ENCODE measurements at regions of chr2 and their contacts with region 1.

Region 1: GRCh38 chr2:218301176-218301819 is 9.0 kb upstream of the TMBIM1 start:
- DNase-seq: peak; percentile 74
- H3K4me3 ChIP-seq: no peak overlapping the region
- H3K27ac ChIP-seq: no peak overlapping the region
- H3K4me1 ChIP-seq: peaks cover 24% of the 10 kb centered on the region
- H3K27me3 ChIP-seq: no peaks in the 10 kb centered on the region
- CTCF ChIP-seq: peak; percentile 94

Region 2: GRCh38 chr2:217703102-217703501 is 598.2 kb before region 1 on chr2:
- CTCF ChIA-PET with region 1: no interaction called
- dilution Hi-C with region 1: no loop called
- in situ Hi-C with region 1: no loop called
- intact Hi-C with region 1: no loop called
- DNase-seq: no peak
- H3K4me3 ChIP-seq: no peak overlapping the region
- H3K27ac ChIP-seq: no peak overlapping the region
- H3K4me1 ChIP-seq: peaks cover 11% of the 10 kb centered on the region
- H3K27me3 ChIP-seq: no peaks in the 10 kb centered on the region
- CTCF ChIP-seq: no peak

Region 3: DNA sequence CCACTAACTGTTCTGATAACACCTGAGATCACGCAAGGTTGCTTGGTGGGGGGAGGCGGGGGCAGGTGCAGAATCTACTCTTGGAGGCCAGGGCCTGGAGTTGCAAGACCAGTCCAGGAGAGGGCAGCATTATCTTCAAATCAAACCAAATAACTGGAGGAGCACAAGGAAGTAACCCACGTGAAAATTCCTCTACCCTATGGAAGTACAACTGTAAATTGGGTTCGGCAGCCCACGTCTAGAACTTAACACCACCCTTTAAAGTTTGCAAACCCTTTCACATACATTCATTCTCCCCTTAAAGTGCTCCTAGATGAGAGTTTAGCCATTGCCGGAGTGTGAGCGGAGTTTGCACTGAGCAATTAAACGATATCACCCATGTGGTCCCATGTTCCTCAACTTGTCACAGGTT is 114.9 kb before region 1 on chr2:
- CTCF ChIA-PET with region 1: no interaction called
- dilution Hi-C with region 1: no loop called
- in situ Hi-C with region 1: no loop called
- intact Hi-C with region 1: no loop called
- DNase-seq: peak; percentile 57
- H3K4me3 ChIP-seq: no peak overlapping the region
- H3K27ac ChIP-seq: no peak overlapping the region
- H3K4me1 ChIP-seq: peaks cover 4% of the 10 kb centered on the region
- H3K27me3 ChIP-seq: no peaks in the 10 kb centered on the region
- CTCF ChIP-seq: peak; percentile 82 to 84

Region 4: DNA sequence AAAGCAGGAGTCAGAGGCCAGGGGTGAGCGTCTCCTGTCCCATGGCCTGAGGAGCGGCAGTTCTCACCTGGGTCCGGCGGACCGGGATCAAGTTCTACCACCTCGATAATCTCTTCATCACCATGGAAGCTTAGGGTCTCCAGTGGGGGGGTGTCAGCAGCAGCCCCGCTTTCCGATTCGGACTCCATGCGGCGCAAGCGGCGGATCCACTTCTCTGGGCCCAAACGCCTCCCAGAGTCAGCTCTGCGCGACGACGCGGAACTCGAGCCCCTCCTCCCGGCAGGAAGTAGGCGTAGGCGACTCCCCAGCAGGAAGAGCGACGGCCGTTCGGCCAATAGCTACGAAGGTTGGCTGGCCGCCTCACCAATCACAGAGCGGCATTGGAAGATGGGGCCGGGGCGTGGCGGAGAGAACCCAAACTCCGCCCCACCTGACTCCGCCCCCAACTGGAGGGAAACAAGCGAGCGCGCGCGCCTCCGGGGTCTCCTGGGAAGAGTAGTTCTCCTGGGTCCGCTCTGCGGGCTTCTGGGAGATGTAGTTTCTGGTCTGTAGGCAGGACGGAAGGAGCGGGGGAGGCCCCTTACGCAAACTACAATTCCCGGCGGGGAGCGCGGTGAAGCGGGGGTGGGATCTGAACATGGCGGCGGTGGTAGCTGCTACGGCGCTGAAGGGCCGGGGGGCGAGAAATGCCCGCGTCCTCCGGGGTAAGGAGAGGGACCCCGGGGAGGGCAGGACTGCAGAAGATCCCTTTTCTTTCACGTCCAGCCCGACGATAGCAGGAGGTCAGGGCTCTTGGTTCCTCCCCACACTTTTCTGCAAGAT is 31.2 kb before region 1 on chr2 and contains the starts of genes AAMP and PNKD:
- CTCF ChIA-PET with region 1: interaction called, 3 read pairs
- dilution Hi-C with region 1: no loop called
- in situ Hi-C with region 1: no loop called
- intact Hi-C with region 1: loop called (anchors 1 kb)
- DNase-seq: peak; percentile 100
- H3K4me3 ChIP-seq: peak within 1 kb of the TSS; percentile 72 to 91 (median 81)
- H3K27ac ChIP-seq: peak within 1 kb of the TSS; percentile 62
- H3K4me1 ChIP-seq: peaks cover 17% of the 10 kb centered on the region
- H3K27me3 ChIP-seq: no peaks in the 10 kb centered on the region
- CTCF ChIP-seq: peak in 1 of 2 donors; percentile 36
- total RNA-seq, gene AAMP: 80.2 to 87.6 TPM
- total RNA-seq, gene PNKD: 15.7 to 29.8 TPM

Region 5: GRCh38 chr2:218354850-218355443 is 53.6 kb after region 1 on chr2:
- CTCF ChIA-PET with region 1: no interaction called
- dilution Hi-C with region 1: no loop called
- in situ Hi-C with region 1: loop called (anchors 5 kb)
- intact Hi-C with region 1: loop called (anchors 1 kb)
- DNase-seq: no peak
- H3K4me3 ChIP-seq: no peak overlapping the region
- H3K27ac ChIP-seq: no peak overlapping the region
- H3K4me1 ChIP-seq: no peaks in the 10 kb centered on the region
- H3K27me3 ChIP-seq: no peaks in the 10 kb centered on the region
- CTCF ChIP-seq: no peak

Region 6: DNA sequence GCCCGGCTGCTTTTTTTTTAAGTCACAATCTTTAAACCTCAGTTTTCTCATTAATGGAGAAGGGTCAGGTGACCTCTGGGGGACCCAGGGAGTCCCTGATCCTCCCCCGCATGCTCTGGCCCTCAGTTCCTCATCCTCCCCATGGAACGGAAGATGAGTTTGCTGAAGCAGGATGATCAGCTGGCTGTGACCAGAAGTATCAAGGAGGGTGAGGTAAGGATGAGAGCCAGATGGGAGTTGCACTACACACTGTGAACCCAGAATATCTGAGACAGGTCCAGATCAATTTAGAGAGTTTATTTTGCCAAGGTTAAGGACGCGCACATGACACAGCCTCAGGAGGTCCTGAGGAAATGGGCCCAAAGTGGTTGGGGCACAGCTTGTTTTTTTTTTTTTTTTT is 59.1 kb after region 1 on chr2:
- CTCF ChIA-PET with region 1: no interaction called
- dilution Hi-C with region 1: no loop called
- in situ Hi-C with region 1: loop called in 1 of 2 experiments (anchors 5 kb)
- intact Hi-C with region 1: loop called (anchors 1 kb)
- DNase-seq: no peak
- H3K4me3 ChIP-seq: no peak overlapping the region
- H3K27ac ChIP-seq: no peak overlapping the region
- H3K4me1 ChIP-seq: no peaks in the 10 kb centered on the region
- H3K27me3 ChIP-seq: no peaks in the 10 kb centered on the region
- CTCF ChIP-seq: no peak

Region 7: DNA sequence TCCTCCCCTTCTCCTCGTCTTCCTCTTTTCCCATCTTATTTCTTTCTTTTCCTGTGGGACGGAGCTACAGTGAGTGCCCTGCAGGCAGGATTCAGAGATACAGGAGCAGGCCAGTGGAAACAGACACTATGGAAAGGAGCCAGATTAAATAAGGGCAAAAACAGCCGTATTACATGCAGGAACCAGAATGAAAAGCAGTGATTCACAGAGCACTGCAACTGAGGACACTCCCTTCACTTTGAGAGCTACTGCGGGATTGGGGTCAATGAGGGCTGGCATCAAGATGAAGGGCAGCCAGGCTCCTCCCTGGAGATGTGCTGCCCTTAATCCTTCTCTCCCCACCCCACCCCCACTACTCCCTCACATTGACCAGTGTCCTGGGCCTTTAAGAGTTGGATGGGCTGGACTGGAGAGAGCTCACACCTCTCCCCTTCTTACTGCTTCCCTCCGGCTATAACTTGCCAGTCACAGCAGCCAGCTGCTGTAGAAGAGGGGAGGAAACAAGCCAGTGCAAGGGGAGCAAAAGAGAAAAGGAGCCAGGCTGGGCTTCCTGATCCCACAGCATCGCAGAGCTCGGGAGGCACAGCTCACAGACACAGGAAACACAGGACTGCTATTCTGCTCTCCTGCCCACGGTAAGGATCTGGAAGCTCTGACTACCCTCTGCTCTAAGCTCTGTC is 306.3 kb after region 1 on chr2 and contains the start of gene PLCD4:
- CTCF ChIA-PET with region 1: no interaction called
- dilution Hi-C with region 1: no loop called
- in situ Hi-C with region 1: no loop called
- intact Hi-C with region 1: no loop called
- DNase-seq: peak; percentile 94
- H3K4me3 ChIP-seq: peak within 1 kb of the TSS; percentile 0 to 37 (median 33)
- H3K27ac ChIP-seq: peak within 1 kb of the TSS; percentile 47
- H3K4me1 ChIP-seq: peaks cover 18% of the 10 kb centered on the region
- H3K27me3 ChIP-seq: no peaks in the 10 kb centered on the region
- CTCF ChIP-seq: peak in 1 of 2 donors; percentile 16
- total RNA-seq, gene PLCD4: 1.8 to 5.4 TPM

Region 8: DNA sequence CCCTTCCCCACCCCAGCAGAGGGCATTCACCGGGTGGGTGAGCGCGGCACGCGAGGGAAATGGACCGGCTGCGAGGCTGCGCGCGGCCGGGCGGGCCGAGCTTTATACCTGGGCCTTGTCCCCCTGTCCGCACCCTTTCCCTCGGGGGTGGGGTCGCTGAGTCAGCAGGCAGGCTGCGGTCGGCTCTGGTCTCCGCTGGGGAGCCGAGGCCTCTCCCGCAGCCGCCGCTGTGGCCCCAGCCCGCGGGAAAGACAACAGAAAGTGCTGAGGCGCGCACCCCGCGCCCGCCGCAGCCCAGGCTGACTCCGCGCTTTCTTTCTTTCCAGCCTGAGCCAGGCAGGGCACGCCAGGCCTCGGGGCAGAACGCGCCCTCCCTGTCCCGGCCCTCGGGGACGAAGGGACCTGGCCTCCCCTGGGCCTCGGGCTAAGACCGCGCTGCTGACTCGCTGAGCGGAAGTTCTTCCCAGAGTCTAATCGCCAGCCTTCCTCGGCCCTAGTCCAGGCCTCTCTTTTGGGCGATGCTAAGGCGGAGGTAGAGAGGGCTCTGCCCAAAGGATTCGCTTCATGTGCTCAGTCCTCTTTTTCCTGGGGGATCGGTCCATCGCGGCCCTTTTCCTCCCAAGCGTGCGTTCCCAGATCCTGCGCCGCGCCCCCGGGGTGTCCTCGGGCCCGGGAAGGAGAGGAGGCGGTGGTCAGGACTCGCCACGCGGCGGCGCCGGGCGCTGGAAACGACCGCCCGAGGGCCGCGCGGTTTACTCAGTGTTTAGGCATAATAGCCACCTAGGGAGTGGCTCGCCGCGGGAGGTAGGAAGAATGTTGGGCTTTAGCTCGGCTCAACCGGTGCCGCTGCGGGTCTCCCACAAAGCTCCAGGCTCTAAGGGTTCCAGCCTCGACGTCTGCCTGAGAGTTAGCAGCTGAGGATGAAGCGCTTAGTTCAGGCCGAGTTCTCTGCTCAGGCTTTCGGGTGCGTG is 692.3 kb after region 1 on chr2 and contains the start of gene CRYBA2:
- CTCF ChIA-PET with region 1: no interaction called
- dilution Hi-C with region 1: no loop called
- in situ Hi-C with region 1: no loop called
- intact Hi-C with region 1: no loop called
- DNase-seq: no peak
- H3K4me3 ChIP-seq: peak within 1 kb of the TSS; percentile 22 to 39 (median 33)
- H3K27ac ChIP-seq: no peak within 1 kb of the TSS
- H3K4me1 ChIP-seq: peaks cover 17% of the 10 kb centered on the region
- H3K27me3 ChIP-seq: peaks cover 4% of the 10 kb centered on the region
- CTCF ChIP-seq: peak in 1 of 2 donors; percentile 5
- total RNA-seq, gene CRYBA2: not detected